ENCODE measurements at regions of chr2 and their contacts with region 1.

Region 1: DNA sequence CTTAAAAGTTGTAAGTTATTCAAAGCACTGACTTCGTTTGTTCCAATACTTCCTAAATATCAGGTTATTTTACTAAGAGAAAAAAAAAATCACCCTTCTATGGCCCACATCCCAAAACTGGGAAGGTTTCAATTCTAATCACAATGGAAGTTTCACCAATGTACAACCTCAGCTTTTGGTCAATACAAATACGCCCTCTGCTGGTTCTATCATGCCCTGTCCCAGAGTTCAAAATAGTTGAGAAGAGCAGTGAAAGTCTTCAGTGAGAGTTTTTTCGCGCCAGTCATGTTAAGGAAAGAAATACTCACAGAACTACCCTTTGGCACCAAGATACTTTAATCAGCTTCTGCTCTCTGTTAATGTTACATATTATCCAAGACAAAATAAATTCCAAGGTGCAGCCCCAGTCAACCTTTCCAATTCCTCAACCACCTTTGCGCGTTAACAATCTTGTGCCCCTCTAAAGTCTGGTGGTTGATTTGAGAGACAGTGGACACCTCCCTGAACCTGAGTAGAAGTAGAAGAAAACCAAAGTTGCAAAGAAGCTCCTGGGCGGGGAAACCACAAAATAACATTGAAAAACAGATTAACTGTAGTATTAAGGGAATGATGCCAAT is 59.9 kb downstream of the SUMO1 start:
- DNase-seq: peak; percentile 41 to 59 (median 42)
- ATAC-seq: peak; percentile 93
- H3K4me3 ChIP-seq: no peak overlapping the region
- H3K27ac ChIP-seq: no peak overlapping the region
- H3K4me1 ChIP-seq: no peaks in the 10 kb centered on the region; a peak in 1 of 5 replicates
- H3K27me3 ChIP-seq: peaks cover 0 to 5% of the 10 kb centered on the region in 2 experiments; a peak in 2 of 5 replicates
- CTCF ChIP-seq: peak; percentile 60 to 75 (median 60); a peak in 5 of 6 replicates
- EP300 ChIP-seq: no peak
- POLR2A ChIP-seq: no peak
- RAD21 ChIP-seq: peak; percentile 72 to 86

Region 2: GRCh38 chr2:201795607-201796477 is 382.6 kb before region 1 on chr2:
- CTCF ChIA-PET with region 1: interaction called, 4 read pairs
- POLR2A ChIA-PET with region 1: no interaction called
- in situ Hi-C with region 1: loop called (anchors 5 kb)
- intact Hi-C with region 1: loop called (anchors 2 kb)
- DNase-seq: peak; percentile 34 to 47 (median 44)
- ATAC-seq: peak; percentile 76
- H3K4me3 ChIP-seq: no peak overlapping the region
- H3K27ac ChIP-seq: no peak overlapping the region
- H3K4me1 ChIP-seq: no peaks in the 10 kb centered on the region; a peak in 1 of 5 replicates
- H3K27me3 ChIP-seq: no peaks in the 10 kb centered on the region
- CTCF ChIP-seq: peak; percentile 59 to 65 (median 60)
- EP300 ChIP-seq: no peak
- POLR2A ChIP-seq: no peak
- RAD21 ChIP-seq: peak; percentile 42 to 67

Region 3: DNA sequence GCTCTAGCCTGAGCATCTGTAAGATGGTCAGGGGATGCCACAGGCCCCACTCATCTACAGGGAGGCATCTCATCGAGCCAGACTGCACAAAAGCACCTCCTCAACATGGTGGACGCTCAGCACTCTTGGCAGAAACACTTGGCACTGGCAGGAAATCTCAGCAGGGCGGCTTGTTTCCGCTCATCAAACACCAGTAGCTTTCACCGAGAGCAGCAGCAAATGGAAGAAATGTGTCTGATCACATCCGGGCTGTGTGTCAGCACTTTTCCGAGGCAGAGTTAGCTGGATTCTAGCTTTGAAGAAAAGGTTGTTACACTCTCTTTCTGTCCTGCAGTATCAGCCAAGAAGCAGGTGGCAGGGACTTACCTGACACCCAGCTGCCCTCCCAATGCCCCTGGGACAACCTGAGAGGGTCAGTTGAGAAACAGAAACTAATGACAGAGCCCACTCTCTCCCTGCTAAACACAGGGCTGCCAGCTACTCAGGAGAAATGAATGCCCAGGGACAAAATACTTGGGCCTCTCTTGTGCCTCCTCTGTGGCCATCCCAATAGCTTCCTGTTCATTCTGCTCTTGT is 213.7 kb before region 1 on chr2:
- CTCF ChIA-PET with region 1: no interaction called
- POLR2A ChIA-PET with region 1: no interaction called
- in situ Hi-C with region 1: no loop called
- intact Hi-C with region 1: loop called (anchors 2 kb)
- DNase-seq: no peak
- ATAC-seq: no peak
- H3K4me3 ChIP-seq: no peak overlapping the region
- H3K27ac ChIP-seq: no peak overlapping the region
- H3K4me1 ChIP-seq: no peaks in the 10 kb centered on the region; a peak in 1 of 5 replicates
- H3K27me3 ChIP-seq: peaks cover 12 to 62% of the 10 kb centered on the region in 2 experiments; a peak in 4 of 5 replicates
- CTCF ChIP-seq: no peak
- EP300 ChIP-seq: no peak
- POLR2A ChIP-seq: no peak
- RAD21 ChIP-seq: no peak

Region 4: GRCh38 chr2:202033321-202034248 is 144.9 kb before region 1 on chr2 and contains the start of gene FZD7:
- CTCF ChIA-PET with region 1: no interaction called
- POLR2A ChIA-PET with region 1: no interaction called
- in situ Hi-C with region 1: no loop called
- intact Hi-C with region 1: no loop called
- DNase-seq: peak; percentile 91 to 93 (median 93)
- ATAC-seq: peak; percentile 95
- H3K4me3 ChIP-seq: peak within 1 kb of the TSS; percentile 69
- H3K27ac ChIP-seq: peak within 1 kb of the TSS; percentile 74
- H3K4me1 ChIP-seq: peaks cover 4 to 39% of the 10 kb centered on the region in 2 experiments; a peak in 3 of 5 replicates
- H3K27me3 ChIP-seq: peaks cover 9 to 10% of the 10 kb centered on the region in 2 experiments; a peak in 3 of 5 replicates
- CTCF ChIP-seq: peak; percentile 14 to 42 (median 21); a peak in 2 of 6 replicates
- EP300 ChIP-seq: no peak
- POLR2A ChIP-seq: peak; percentile 49; the same call in 1 of the 2 replicates
- RAD21 ChIP-seq: no peak
- polyA plus RNA-seq, gene FZD7: 0.11 to 0.18 TPM

Region 5: GRCh38 chr2:202104278-202104870 is 74.1 kb before region 1 on chr2:
- CTCF ChIA-PET with region 1: no interaction called
- POLR2A ChIA-PET with region 1: no interaction called
- in situ Hi-C with region 1: no loop called
- intact Hi-C with region 1: loop called (anchors 5 kb)
- DNase-seq: peak; percentile 42 to 65 (median 47)
- ATAC-seq: peak; percentile 95
- H3K4me3 ChIP-seq: no peak overlapping the region
- H3K27ac ChIP-seq: no peak overlapping the region
- H3K4me1 ChIP-seq: no peaks in the 10 kb centered on the region
- H3K27me3 ChIP-seq: peaks cover 5 to 26% of the 10 kb centered on the region in 2 experiments; a peak in 4 of 5 replicates
- CTCF ChIP-seq: peak; percentile 61 to 81 (median 73)
- EP300 ChIP-seq: no peak
- POLR2A ChIP-seq: no peak
- RAD21 ChIP-seq: peak; percentile 33 to 59; a peak in 3 of 4 replicates

Region 6: DNA sequence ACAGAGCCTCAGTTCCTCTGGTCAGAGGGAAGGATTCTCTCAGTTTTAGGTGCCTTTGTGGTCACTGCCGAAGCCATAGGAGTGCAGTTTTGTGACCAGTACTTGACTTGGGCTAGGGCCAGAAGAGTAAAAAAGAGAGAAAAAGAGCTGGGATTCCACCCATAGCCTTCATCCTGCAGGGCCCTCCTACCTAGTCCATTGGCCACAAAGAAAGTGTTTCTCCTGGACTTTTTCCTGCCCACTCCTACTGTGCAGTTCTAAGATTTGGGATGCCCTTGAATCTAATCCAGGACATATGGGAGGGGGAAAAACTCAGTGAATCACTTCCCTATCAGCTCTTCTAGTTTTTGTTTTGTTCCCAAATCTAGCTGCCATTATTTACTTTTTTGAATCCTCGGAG is 482.3 kb after region 1 on chr2:
- CTCF ChIA-PET with region 1: no interaction called
- POLR2A ChIA-PET with region 1: no interaction called
- in situ Hi-C with region 1: no loop called
- intact Hi-C with region 1: no loop called
- DNase-seq: no peak
- ATAC-seq: no peak
- H3K4me3 ChIP-seq: no peak overlapping the region
- H3K27ac ChIP-seq: no peak overlapping the region
- H3K4me1 ChIP-seq: no peaks in the 10 kb centered on the region; a peak in 2 of 5 replicates
- H3K27me3 ChIP-seq: no peaks in the 10 kb centered on the region
- CTCF ChIP-seq: no peak
- EP300 ChIP-seq: no peak
- POLR2A ChIP-seq: no peak
- RAD21 ChIP-seq: no peak

Measured in K562 (cell line).